Activated CD4-positive, alpha-beta memory T cell treated with anti-CD3 and anti-CD28 coated beads, Interleukin-2, amount 10 ng/mL, durations not matched to agents 7 days and 5 days (primary cell): ENCODE measurements at regions of chr12 and their contacts with region 1.

Region 1: DNA sequence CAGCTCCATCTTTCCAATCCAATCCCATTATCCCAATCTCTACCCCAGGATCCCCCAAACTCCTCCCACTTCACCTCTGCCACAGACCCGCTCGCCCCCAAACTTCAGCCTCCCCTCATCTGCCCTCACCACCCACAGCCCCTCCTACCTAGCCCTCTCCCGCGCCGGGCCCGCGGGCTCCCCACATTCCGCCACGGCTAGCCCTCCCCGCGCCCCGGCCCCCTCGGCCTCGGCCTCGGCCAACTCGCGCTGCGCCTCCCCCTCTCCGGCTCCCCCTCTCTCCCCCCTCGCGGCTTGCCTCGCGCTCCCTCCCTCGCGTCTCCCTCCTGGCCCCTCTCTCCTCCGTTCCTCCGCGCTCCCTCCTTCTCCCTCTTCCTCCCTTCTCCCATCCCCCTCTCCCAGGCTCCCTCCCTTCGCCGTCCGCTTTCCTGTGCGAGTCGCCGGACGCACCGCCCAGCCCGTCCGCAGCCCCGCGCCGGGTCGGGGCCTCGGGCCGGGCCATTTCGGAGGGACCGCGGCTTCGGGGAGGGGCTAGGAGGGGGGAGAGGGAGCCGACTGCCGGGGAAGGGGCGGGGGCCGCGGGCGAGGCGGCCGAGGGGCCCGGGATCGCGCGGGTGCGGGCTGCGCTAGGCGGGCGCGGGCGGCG is at the start of gene ATN1:
- DNase-seq: peak; percentile 48
- H3K4me3 Mint-ChIP-seq: peak within 1 kb of the TSS; percentile 90
- H3K27ac Mint-ChIP-seq: peak within 1 kb of the TSS; percentile 78
- H3K4me1 Mint-ChIP-seq: peaks cover 68% of the 10 kb centered on the region
- H3K27me3 Mint-ChIP-seq: no peaks in the 10 kb centered on the region
- total RNA-seq, gene ATN1: 33.9 to 34.6 TPM

Region 2: GRCh38 chr12:6735448-6736191 is 191.9 kb before region 1 on chr12:
- CTCF ChIA-PET with region 1: no interaction called
- POLR2A ChIA-PET with region 1: no interaction called
- DNase-seq: peak; percentile 53
- H3K4me3 Mint-ChIP-seq: no peak overlapping the region
- H3K27ac Mint-ChIP-seq: no peak overlapping the region
- H3K4me1 Mint-ChIP-seq: peaks cover 6% of the 10 kb centered on the region
- H3K27me3 Mint-ChIP-seq: no peaks in the 10 kb centered on the region

Region 3: DNA sequence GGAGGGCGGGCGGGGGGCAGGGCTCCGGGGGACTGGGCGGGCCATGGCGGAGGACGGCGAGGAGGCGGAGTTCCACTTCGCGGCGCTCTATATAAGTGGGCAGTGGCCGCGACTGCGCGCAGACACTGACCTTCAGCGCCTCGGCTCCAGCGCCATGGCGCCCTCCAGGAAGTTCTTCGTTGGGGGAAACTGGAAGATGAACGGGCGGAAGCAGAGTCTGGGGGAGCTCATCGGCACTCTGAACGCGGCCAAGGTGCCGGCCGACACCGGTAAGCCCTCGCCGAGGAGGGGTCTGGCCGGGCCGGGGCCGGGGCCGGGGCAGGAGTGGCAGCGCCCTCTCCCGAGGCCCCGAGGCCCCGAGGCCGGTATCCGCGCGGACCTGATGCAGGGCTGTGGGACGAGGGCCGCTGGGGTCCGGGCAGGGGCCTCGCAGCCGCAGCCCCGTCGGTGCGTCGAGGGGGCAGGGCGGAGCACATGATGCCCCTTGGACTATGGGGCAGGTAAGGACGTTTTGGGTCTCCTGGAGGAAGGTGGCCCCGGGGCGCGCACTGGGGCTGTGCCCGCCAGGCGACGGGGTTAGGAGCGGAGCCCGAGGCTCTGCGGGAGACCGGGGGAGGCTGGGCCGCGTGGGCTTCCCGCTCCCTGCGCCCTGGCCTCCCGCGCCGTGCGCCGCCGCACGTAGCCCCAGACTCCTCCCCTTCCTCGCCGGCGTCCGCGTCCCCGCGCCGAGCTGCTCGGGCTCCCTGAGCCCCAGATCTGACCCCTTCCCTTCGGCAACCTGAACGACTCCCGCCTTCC is 59.9 kb before region 1 on chr12 and contains the start of gene TPI1:
- CTCF ChIA-PET with region 1: interaction called, 10 read pairs
- POLR2A ChIA-PET with region 1: interaction called, 10 read pairs
- DNase-seq: peak; percentile 83
- H3K4me3 Mint-ChIP-seq: peak within 1 kb of the TSS; percentile 97
- H3K27ac Mint-ChIP-seq: peak within 1 kb of the TSS; percentile 95
- H3K4me1 Mint-ChIP-seq: peaks cover 54% of the 10 kb centered on the region
- H3K27me3 Mint-ChIP-seq: no peaks in the 10 kb centered on the region
- total RNA-seq, gene TPI1: 1,228 to 1,253 TPM

Region 4: GRCh38 chr12:6904280-6905278 is 22.9 kb before region 1 on chr12 and contains the start of gene LRRC23:
- CTCF ChIA-PET with region 1: interaction called, 28 read pairs
- POLR2A ChIA-PET with region 1: interaction called, 3 read pairs
- DNase-seq: peak; percentile 99
- H3K4me3 Mint-ChIP-seq: no peak within 1 kb of the TSS
- H3K27ac Mint-ChIP-seq: no peak within 1 kb of the TSS
- H3K4me1 Mint-ChIP-seq: peaks cover 2% of the 10 kb centered on the region
- H3K27me3 Mint-ChIP-seq: no peaks in the 10 kb centered on the region
- total RNA-seq, gene LRRC23: 5.7 to 6.1 TPM

Region 5: DNA sequence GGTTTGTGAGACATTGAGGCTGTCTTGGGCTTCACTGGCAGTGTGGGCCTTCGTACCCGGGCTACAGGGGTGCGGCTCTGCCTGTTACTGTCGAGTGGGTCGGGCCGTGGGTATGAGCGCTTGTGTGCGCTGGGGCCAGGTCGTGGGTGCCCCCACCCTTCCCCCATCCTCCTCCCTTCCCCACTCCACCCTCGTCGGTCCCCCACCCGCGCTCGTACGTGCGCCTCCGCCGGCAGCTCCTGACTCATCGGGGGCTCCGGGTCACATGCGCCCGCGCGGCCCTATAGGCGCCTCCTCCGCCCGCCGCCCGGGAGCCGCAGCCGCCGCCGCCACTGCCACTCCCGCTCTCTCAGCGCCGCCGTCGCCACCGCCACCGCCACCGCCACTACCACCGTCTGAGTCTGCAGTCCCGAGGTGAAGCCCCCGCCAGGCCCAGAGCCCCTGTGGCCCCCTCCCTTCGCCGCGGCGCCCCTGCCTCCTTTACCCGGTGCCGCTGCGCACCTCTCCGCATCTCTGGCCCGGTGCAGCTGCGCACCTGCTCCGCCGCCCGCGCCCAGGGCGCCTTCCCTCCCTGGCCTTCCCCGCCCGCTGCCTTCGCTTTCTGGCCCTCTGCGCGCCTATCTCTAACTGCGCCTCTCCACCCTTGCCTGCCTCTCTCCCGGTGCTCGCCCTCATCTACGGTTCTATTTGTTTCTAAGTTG is 13.1 kb before region 1 on chr12 and contains the start of gene ENO2:
- CTCF ChIA-PET with region 1: interaction called, 28 read pairs
- POLR2A ChIA-PET with region 1: interaction called, 6 read pairs
- DNase-seq: peak; percentile 86
- H3K4me3 Mint-ChIP-seq: peak within 1 kb of the TSS; percentile 90
- H3K27ac Mint-ChIP-seq: peak within 1 kb of the TSS; percentile 80
- H3K4me1 Mint-ChIP-seq: peaks cover 50% of the 10 kb centered on the region
- H3K27me3 Mint-ChIP-seq: no peaks in the 10 kb centered on the region
- total RNA-seq, gene ENO2: 206 to 207 TPM

Region 6: DNA sequence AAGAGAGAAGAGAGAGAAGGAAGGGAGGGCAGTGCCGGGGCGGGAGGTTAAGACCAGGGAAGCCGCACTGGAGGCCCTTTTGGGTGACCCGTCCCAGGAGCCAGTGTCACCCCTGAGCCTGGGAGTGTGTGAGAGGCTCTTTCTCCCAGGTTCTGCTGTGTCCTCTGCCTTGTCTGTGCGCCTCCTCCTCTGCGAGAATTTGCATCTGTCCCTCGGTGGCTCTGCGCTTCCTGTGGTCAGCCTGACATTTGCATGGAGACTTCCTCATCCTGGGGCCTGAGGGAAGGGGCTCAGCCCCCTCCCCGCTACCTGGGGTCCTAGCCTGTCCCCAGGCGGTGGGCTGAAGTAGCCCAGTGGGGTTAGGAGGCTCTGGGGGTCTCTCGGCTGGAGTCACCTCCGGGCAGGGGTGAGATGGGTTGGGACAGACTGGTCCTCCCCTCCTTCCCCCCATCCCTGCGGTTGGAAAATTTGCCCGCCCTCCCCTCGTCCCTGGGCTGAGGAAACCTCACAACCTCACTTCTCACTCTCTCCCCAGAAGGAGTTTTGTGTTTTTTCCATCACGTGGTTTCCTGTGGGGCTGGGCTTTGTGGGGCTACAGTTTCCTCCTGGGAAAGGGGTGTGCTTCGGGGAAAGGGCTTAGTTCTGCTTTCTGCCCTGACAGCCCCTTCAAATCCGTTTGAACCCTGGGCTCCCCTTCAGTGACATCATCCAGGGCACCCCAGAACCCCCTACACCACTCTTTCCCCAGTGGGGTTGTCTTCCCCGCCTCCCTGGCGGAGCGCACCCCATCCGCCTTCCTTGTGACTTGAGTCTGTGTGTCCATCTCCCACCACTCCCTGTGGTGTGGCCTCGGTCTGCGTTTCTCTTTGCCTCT is 26.2 kb after region 1 on chr12:
- CTCF ChIA-PET with region 1: interaction called, 17 read pairs
- POLR2A ChIA-PET with region 1: interaction called, 295 read pairs
- DNase-seq: peak; percentile 84
- H3K4me3 Mint-ChIP-seq: peak overlapping the region; percentile 94
- H3K27ac Mint-ChIP-seq: peak overlapping the region; percentile 99
- H3K4me1 Mint-ChIP-seq: peaks cover 81% of the 10 kb centered on the region
- H3K27me3 Mint-ChIP-seq: no peaks in the 10 kb centered on the region

Region 7: GRCh38 chr12:6965026-6965661 is 37.6 kb after region 1 on chr12:
- CTCF ChIA-PET with region 1: interaction called, 12 read pairs
- POLR2A ChIA-PET with region 1: interaction called, 36 read pairs
- DNase-seq: peak; percentile 89
- H3K4me3 Mint-ChIP-seq: no peak overlapping the region
- H3K27ac Mint-ChIP-seq: peak overlapping the region; percentile 83
- H3K4me1 Mint-ChIP-seq: peaks cover 79% of the 10 kb centered on the region
- H3K27me3 Mint-ChIP-seq: no peaks in the 10 kb centered on the region

Region 8: GRCh38 chr12:7108796-7109571 is 181.5 kb after region 1 on chr12 and contains the start of gene C1RL:
- CTCF ChIA-PET with region 1: interaction called, 17 read pairs
- POLR2A ChIA-PET with region 1: interaction called, 11 read pairs
- DNase-seq: peak; percentile 83
- H3K4me3 Mint-ChIP-seq: peak within 1 kb of the TSS; percentile 91
- H3K27ac Mint-ChIP-seq: peak within 1 kb of the TSS; percentile 94
- H3K4me1 Mint-ChIP-seq: peaks cover 61% of the 10 kb centered on the region
- H3K27me3 Mint-ChIP-seq: no peaks in the 10 kb centered on the region
- total RNA-seq, gene C1RL: 26.5 to 28.8 TPM